ENCODE measurements at regions of chr1 and their contacts with region 1.

Region 1: DNA sequence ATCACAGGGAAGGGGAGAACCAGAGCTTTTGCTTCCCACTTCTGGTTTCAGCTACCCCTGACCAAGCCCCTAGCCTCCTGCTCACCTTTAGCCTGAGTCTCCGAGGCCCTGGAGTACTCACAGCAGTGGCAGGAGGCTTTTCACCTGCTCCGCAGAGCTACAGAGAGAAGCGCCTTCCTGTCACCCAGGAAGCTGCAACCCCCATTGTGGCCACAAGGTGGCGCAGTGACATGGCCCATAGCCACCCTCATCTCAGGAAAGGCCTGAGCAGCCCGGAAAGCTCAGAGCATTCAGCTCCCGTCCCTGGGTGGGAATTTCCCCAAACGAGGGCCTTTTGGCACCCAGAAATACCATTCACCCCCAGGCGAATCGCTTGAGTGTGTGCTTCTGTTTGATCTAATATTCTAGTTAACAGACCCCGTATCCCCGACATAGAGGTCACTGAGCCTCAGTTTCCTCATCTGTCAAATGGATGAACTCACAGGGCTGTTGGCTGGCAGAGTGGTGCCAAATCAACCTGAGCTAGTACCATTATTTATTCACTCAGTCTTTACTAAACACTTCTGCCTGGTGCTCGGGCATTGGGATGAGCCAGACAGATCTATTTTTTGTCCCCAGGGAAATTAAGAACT is 25.3 kb downstream of the A3GALT2 start:
- DNase-seq: peak; percentile 76 to 97 (median 86)
- ATAC-seq: peak; percentile 93
- H3K4me3 ChIP-seq: no peak overlapping the region
- H3K27ac ChIP-seq: peak overlapping the region in 1 of 2 donors; percentile 33
- H3K4me1 ChIP-seq: peaks cover 3 to 26% of the 10 kb centered on the region in 2 donors
- H3K27me3 ChIP-seq: no peaks in the 10 kb centered on the region
- CTCF ChIP-seq: peak; percentile 94 to 100

Region 2: DNA sequence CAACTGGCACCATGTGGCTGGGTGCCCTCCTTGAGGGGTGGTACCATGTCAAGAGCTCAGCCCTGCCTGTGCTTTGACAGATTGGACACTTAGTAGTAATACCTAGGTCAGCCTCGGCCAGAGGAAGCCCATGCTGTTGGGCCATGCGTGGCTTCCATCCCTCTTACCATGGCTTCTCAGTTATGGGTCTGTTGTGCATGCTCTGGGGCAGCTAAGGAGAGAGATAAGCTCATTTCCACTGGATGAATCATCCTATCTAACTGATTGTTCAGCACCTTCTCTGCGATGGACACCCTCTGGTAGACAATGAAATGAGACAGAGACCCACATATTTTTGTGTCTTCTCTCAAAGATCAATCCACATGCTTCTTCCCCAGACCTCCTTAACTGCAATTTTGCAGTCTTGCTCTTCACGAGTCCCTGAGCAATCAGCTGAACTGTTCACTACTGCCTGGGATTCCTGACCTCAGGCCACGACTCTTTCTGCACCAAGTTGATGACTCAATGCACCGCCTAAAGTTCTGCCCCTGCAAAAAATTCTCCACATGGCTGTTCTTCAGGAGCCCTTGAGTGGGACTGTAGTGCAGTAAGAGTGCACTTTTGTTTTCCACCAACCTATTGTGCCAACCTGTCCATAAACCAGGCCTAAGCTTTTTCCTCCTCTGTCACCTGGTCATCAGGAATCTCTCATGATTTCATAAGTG is 106.8 kb before region 1 on chr1:
- intact Hi-C with region 1: no loop called
- DNase-seq: no peak
- ATAC-seq: peak; percentile 95
- H3K4me3 ChIP-seq: no peak overlapping the region
- H3K27ac ChIP-seq: no peak overlapping the region
- H3K4me1 ChIP-seq: no peaks in the 10 kb centered on the region
- H3K27me3 ChIP-seq: no peaks in the 10 kb centered on the region
- CTCF ChIP-seq: no peak

Region 3: GRCh38 chr1:33367485-33368405 is 72.2 kb after region 1 on chr1:
- intact Hi-C with region 1: loop called in 1 of 2 experiments (anchors 5 kb)
- DNase-seq: peak; percentile 76 to 98 (median 90)
- ATAC-seq: peak; percentile 92
- H3K4me3 ChIP-seq: no peak overlapping the region
- H3K27ac ChIP-seq: peak overlapping the region in 1 of 2 donors; percentile 54
- H3K4me1 ChIP-seq: peaks cover 3 to 29% of the 10 kb centered on the region in 2 donors
- H3K27me3 ChIP-seq: no peaks in the 10 kb centered on the region
- CTCF ChIP-seq: peak; percentile 94 to 95

Region 4: DNA sequence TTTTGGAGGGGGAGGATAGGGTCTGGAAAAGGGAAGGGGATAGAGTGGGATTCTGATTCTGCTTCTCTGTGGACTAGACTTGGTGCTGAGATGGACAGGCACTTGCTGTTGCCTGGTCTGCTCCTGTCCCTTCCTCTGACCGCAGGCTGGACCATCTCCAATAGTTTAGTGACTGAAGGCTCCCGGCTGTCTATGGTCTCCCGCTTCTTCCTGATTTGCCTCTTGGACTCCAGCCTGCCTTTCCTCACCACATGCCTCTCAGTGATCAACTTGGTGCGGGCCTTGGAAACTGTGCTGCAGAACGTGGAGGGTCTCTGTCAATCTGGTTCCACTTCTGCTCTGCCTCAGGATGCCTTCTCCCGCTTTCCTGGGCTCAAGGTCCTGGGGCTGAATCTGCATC is 170.6 kb after region 1 on chr1:
- intact Hi-C with region 1: loop called in 1 of 2 experiments (anchors 5 kb)
- DNase-seq: peak in 2 of 4 donors; percentile 34 to 62
- ATAC-seq: no peak
- H3K4me3 ChIP-seq: no peak overlapping the region
- H3K27ac ChIP-seq: no peak overlapping the region
- H3K4me1 ChIP-seq: peaks cover 0 to 12% of the 10 kb centered on the region in 2 donors
- H3K27me3 ChIP-seq: no peaks in the 10 kb centered on the region
- CTCF ChIP-seq: no peak

Measured in left lung (tissue), 14 donors.